ENCODE measurements at regions of chr2 and their contacts with region 1.

Region 1: DNA sequence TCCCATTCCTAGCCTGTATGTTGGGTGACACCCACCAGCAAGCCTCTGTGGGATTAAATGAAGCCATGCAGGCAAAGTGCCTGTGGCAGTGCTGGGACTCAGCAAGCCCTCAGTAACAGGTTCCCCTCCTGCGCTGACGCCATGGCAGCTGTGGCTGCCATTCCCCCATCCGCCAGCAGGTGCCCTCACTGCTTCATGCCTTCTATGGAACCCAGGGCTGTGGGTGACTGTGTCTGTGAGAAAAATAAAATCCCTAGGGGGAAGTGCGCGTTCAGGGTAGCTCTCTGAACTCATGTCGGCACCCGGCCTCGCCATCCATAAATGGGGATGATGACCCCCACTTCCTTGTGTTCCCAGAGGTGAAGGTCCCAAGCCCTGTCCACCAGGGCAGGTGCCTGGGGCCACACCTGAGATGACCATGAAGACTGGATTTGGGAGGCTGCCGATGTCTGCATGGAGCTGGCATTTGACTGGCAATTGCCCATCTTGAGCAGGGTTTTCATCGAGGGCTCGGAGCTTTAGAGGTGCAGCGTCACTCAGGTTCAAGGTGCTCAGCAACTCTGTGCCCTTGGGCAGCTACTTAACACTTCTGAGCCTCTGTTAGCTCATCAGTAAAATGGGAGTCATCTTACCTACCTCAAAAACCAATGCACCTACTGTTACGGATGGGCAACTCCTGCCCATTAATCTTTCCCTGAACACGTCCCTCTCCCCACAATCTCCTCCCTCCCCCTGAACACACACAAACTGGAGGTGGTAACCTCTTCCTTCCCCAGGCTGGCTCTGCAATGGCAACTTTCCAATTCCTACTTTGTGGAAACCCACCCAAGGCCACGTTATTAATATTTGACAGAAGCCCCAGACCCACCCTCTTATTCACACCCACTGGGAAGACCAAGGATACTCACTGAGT is 2.9 kb upstream of the MAL start:
- DNase-seq: peak in 5 of 6 donors; percentile 36 to 88 (median 70)
- ATAC-seq: peak; percentile 73 to 93 (median 88)
- H3K4me3 ChIP-seq: no peak overlapping the region
- H3K27ac ChIP-seq: no peak overlapping the region
- H3K4me1 ChIP-seq: peaks cover 0 to 4% (median 0%) of the 10 kb centered on the region in 3 donors
- H3K27me3 ChIP-seq: peaks cover 0 to 10% (median 4%) of the 10 kb centered on the region in 4 donors
- CTCF ChIP-seq: peak; percentile 84 to 96 (median 88)

Region 2: DNA sequence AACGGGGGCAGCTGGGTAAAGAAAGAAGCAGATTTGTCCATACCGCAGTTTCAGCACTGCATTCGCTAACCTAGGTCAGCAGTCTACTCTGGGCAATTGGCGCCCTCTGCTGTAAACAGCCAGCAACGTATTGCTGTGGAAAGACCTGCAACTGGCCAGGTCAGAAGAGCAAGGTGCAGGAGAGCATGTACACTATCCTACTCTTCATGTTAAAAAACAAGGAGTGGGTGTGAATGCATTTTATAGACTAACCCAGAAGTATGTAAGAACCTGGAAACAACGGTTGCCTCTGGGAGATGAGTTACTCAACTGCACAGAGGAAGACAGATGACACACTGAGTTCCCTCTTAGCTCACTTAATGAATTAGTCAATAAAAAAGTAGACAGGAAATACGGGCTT is 92.9 kb after region 1 on chr2:
- intact Hi-C with region 1: loop called in 1 of 3 experiments (anchors 10 kb)
- DNase-seq: peak; percentile 57 to 78 (median 74)
- ATAC-seq: peak; percentile 93 to 100 (median 98)
- H3K4me3 ChIP-seq: no peak overlapping the region
- H3K27ac ChIP-seq: no peak overlapping the region
- H3K4me1 ChIP-seq: peaks cover 0 to 10% (median 9%) of the 10 kb centered on the region in 3 donors
- H3K27me3 ChIP-seq: no peaks in the 10 kb centered on the region
- CTCF ChIP-seq: peak; percentile 43 to 63 (median 51)

Measured in pancreas (tissue), 10 donors.